PC-9 (cell line): ENCODE measurements at regions of chr14 and their contacts with region 1.

Region 1: DNA sequence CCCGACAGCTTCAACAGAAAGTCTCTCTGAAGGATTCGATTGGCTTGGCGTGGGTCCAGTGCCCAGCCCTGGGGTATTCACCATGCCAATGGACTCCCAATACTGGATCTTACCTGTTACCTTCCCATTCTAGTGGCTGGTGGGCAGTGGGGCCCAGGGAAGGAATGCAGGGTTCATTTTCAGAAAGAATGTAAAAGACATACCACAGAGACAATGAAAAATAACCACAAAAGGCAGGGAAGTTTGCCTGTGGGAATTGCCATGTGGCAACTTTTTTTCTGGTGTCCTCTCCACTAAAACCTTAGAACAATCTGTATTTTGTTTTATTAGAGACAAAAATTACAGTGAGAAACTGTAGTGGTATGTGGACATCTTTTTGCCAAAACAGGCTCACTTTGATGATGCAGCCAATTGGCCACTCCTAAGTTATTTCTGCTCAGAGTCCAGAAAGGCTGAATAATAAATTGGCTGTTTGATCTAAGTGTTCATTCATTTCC is 55.2 kb downstream of the PTGER2 start:
- DNase-seq: peak in 1 of 2 experiments; percentile 64
- H3K4me3 ChIP-seq: no peak overlapping the region
- H3K27ac ChIP-seq: no peak overlapping the region
- H3K4me1 ChIP-seq: peaks cover 17% of the 10 kb centered on the region
- H3K27me3 ChIP-seq: no peaks in the 10 kb centered on the region
- CTCF ChIP-seq: no peak

Region 2: GRCh38 chr14:52355016-52355431 is 14.3 kb before region 1 on chr14:
- CTCF ChIA-PET with region 1: no interaction called
- POLR2A ChIA-PET with region 1: no interaction called
- intact Hi-C with region 1: loop called (anchors 1 kb)
- DNase-seq: peak; percentile 31 to 54
- H3K4me3 ChIP-seq: no peak overlapping the region; the same call in 1 of the 2 replicates
- H3K27ac ChIP-seq: peak overlapping the region; percentile 54; the same call in 1 of the 2 replicates
- H3K4me1 ChIP-seq: peaks cover 16% of the 10 kb centered on the region
- H3K27me3 ChIP-seq: no peaks in the 10 kb centered on the region
- CTCF ChIP-seq: no peak

Region 3: GRCh38 chr14:52640137-52640536 is 270.8 kb after region 1 on chr14:
- CTCF ChIA-PET with region 1: no interaction called
- POLR2A ChIA-PET with region 1: interaction called, 17 read pairs
- intact Hi-C with region 1: no loop called
- DNase-seq: no peak
- H3K4me3 ChIP-seq: no peak overlapping the region
- H3K27ac ChIP-seq: no peak overlapping the region
- H3K4me1 ChIP-seq: no peaks in the 10 kb centered on the region
- H3K27me3 ChIP-seq: no peaks in the 10 kb centered on the region
- CTCF ChIP-seq: no peak

Region 4: GRCh38 chr14:52695481-52696091 is 326.2 kb after region 1 on chr14 and contains the start of gene ERO1A:
- CTCF ChIA-PET with region 1: no interaction called
- POLR2A ChIA-PET with region 1: no interaction called
- intact Hi-C with region 1: no loop called
- DNase-seq: peak; percentile 69 to 85
- H3K4me3 ChIP-seq: peak within 1 kb of the TSS; percentile 62
- H3K27ac ChIP-seq: peak within 1 kb of the TSS; percentile 92
- H3K4me1 ChIP-seq: peaks cover 55% of the 10 kb centered on the region
- H3K27me3 ChIP-seq: no peaks in the 10 kb centered on the region
- CTCF ChIP-seq: no peak
- total RNA-seq, gene ERO1A: 83.6 and 83.9 TPM in 2 replicates

Region 5: GRCh38 chr14:53032161-53032803 is 662.9 kb after region 1 on chr14:
- CTCF ChIA-PET with region 1: no interaction called
- POLR2A ChIA-PET with region 1: no interaction called
- intact Hi-C with region 1: no loop called
- DNase-seq: peak; percentile 15 to 46
- H3K4me3 ChIP-seq: no peak overlapping the region
- H3K27ac ChIP-seq: no peak overlapping the region
- H3K4me1 ChIP-seq: no peaks in the 10 kb centered on the region; the same call in 1 of the 2 replicates
- H3K27me3 ChIP-seq: no peaks in the 10 kb centered on the region
- CTCF ChIP-seq: no peak